Endothelial cell of umbilical vein (primary cell): ENCODE measurements at regions of chr11 and their contacts with region 1.

Region 1: DNA sequence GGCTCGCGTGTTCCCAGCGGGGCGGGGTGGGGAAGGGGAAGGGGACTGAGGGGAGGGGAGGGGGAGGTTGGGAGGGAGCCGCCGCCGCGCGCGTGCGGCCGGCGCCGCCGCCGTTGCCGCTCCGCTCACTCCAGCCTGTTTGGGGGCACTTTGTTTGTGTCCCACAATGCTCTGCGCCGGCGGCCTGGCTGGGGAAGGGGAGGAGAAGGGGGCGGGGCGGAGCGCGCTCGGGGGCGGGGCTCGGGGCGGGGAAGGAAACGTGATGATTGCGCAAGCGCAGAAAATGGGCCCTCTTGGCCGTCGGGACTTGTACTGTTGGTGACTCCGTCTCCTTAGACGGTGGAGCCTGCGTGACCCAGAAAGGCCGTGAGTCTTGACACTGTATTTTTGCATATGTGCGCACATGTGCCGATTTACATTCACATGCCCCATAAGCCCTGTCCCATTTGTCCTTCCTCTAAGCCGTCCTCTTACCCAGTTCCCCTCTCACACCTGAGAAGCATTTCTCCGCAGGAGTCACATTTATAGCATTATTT is at the start of gene ZBTB44:
- DNase-seq: peak; percentile 85
- H3K4me3 ChIP-seq: peak within 1 kb of the TSS; percentile 51 to 97 (median 71)
- H3K27ac ChIP-seq: peak within 1 kb of the TSS; percentile 53
- H3K4me1 ChIP-seq: peaks cover 11% of the 10 kb centered on the region
- H3K27me3 ChIP-seq: peaks cover 0 to 6% of the 10 kb centered on the region in 2 experiments
- CTCF ChIP-seq: no peak
- POLR2A ChIP-seq: peak; percentile 65
- total RNA-seq, gene ZBTB44: 20.3 and 24.4 TPM in 2 replicates

Region 2: GRCh38 chr11:129895126-129896041 is 419.4 kb before region 1 on chr11 and contains the start of gene NFRKB:
- CTCF ChIA-PET with region 1: no interaction called
- POLR2A ChIA-PET with region 1: no interaction called
- dilution Hi-C with region 1: no loop called
- intact Hi-C with region 1: loop called (anchors 10 kb)
- DNase-seq: peak; percentile 84
- H3K4me3 ChIP-seq: peak within 1 kb of the TSS; percentile 72 to 95 (median 93)
- H3K27ac ChIP-seq: no peak within 1 kb of the TSS
- H3K4me1 ChIP-seq: peaks cover 9% of the 10 kb centered on the region
- H3K27me3 ChIP-seq: no peaks in the 10 kb centered on the region
- CTCF ChIP-seq: no peak
- POLR2A ChIP-seq: peak; percentile 83
- total RNA-seq, gene NFRKB: 30.1 and 30.6 TPM in 2 replicates

Region 3: GRCh38 chr11:130278151-130278550 is 36.7 kb before region 1 on chr11:
- CTCF ChIA-PET with region 1: no interaction called
- POLR2A ChIA-PET with region 1: no interaction called
- dilution Hi-C with region 1: no loop called
- intact Hi-C with region 1: no loop called
- DNase-seq: no peak
- H3K4me3 ChIP-seq: no peak overlapping the region
- H3K27ac ChIP-seq: no peak overlapping the region
- H3K4me1 ChIP-seq: no peaks in the 10 kb centered on the region
- H3K27me3 ChIP-seq: no peaks in the 10 kb centered on the region
- CTCF ChIP-seq: no peak
- POLR2A ChIP-seq: no peak

Region 4: DNA sequence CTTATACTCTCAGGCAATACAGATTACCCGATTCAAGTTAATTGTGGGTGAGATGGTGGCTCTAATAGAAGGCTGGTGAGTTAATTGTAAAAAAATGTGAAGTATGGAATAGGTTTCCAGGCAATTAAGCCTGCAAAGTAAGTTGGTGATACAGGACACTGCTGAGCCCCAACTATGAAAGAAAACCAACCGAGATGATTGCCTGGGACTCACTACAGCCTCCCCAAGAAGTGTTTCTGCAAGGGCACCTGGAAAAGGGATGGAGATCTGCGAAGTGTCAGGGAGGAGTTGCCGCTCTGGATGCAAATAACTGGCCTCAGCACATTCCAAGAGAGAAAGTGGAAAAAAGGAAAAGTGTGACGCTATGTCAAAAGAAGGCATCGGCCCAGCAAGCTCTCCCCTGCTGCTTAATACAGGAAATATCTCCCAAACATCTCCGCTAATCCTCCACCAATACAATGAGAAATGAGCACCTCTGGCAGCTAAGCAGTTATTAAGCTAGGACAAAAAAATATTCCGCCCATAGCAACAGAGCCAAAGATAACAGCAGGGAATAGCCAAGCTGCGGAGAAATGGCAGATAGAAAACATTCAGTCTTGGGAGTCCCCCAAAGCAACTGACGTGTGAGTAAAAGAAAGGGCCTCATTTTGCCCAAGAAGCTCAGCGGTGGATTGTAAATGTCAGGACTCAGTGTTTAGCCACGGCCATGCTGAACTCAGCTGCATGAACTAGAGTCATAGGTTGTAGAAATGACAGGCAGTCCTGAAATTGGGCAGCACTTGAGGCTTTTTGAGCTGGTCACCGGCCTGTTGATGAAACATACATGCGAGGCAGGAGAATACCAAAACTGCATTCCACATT is 467.8 kb after region 1 on chr11:
- CTCF ChIA-PET with region 1: no interaction called
- POLR2A ChIA-PET with region 1: no interaction called
- dilution Hi-C with region 1: no loop called
- intact Hi-C with region 1: loop called (anchors 2 kb)
- DNase-seq: peak; percentile 66
- H3K4me3 ChIP-seq: no peak overlapping the region
- H3K27ac ChIP-seq: peak overlapping the region; percentile 23
- H3K4me1 ChIP-seq: peaks cover 23% of the 10 kb centered on the region
- H3K27me3 ChIP-seq: no peaks in the 10 kb centered on the region
- CTCF ChIP-seq: no peak
- POLR2A ChIP-seq: no peak